Activated naive CD4-positive, alpha-beta T cell treated with anti-CD3 and anti-CD28 coated beads for 36 hours (primary cell): ENCODE measurements at regions of chr11 and their contacts with region 1.

Region 1: DNA sequence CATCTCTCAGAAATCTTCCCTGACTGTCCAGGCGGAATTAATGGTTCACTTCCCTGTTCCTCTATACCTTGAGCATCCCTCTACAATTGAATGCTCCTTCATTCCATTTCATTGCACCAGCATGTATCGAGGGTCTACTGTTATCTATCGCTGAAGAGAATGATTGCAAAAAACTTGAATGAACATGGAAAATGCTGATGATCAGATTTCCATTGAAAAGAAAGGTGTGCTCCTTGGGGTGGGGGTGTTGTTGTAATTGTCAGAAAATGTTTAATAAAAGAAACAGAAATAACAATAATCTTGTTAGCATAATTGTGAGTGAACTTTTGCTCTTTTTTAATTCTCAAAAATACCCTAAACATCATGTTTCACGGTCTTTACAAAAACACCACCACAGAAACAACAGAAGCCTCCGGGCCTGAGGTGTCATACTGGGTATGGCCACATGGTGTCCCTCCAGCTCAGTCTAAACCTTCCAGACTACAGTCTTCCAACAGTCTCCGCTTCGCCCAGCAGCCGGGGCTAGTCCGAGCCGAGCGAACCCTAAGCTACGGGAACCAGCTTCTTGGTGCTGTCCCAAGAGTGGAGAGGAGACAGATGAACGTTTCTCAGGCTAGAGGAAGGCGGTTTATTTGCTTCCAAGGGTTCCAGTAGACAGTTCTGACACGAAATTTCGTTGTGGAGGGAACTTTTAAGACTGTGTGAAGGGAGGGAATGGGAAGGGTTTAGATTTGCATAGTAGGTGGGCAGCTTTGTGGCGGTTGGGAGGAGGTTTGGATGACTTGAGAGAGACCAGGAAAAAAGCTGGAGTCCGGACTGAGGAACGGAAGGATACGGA is 75.8 kb upstream of the ZBED5 start:
- DNase-seq: peak; percentile 93
- H3K4me3 Mint-ChIP-seq: peak overlapping the region; percentile 70
- H3K27ac Mint-ChIP-seq: no peak overlapping the region
- H3K4me1 Mint-ChIP-seq: peaks cover 12% of the 10 kb centered on the region
- H3K27me3 Mint-ChIP-seq: peaks cover 31% of the 10 kb centered on the region

Region 2: GRCh38 chr11:10808553-10809372 is 124.9 kb before region 1 on chr11 and contains the start of gene EIF4G2:
- CTCF ChIA-PET with region 1: no interaction called
- intact Hi-C with region 1: loop called (anchors 5 kb)
- DNase-seq: peak; percentile 98
- H3K4me3 Mint-ChIP-seq: peak within 1 kb of the TSS; percentile 95
- H3K27ac Mint-ChIP-seq: peak within 1 kb of the TSS; percentile 97
- H3K4me1 Mint-ChIP-seq: peaks cover 43% of the 10 kb centered on the region
- H3K27me3 Mint-ChIP-seq: no peaks in the 10 kb centered on the region
- total RNA-seq, gene EIF4G2: 640 to 734 TPM

Region 3: DNA sequence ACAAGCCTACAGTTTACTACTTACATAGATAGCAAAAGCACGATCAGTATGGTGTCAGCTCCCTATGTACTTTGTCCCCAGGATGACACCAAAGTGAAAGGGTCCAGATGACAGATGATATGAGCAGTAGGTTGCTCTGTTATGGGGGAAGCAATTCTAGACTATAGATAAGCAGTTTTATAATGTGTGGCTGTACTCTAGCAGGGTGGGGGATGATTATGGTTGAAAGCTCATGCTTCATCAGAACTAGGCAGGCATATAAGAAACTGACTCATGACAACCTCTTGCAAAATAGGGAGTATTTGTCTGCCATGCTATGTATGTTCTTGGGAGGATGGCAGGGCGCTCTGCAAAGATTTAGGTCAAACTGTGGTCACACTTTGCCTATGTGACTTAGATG is 82.4 kb after region 1 on chr11:
- CTCF ChIA-PET with region 1: interaction called, 33 read pairs
- intact Hi-C with region 1: no loop called
- DNase-seq: no peak
- H3K4me3 Mint-ChIP-seq: no peak overlapping the region
- H3K27ac Mint-ChIP-seq: no peak overlapping the region
- H3K4me1 Mint-ChIP-seq: no peaks in the 10 kb centered on the region
- H3K27me3 Mint-ChIP-seq: peaks cover under 1% of the 10 kb centered on the region

Region 4: GRCh38 chr11:11028017-11028692 is 94.5 kb after region 1 on chr11:
- CTCF ChIA-PET with region 1: interaction called, 40 read pairs
- intact Hi-C with region 1: no loop called
- DNase-seq: peak; percentile 88
- H3K4me3 Mint-ChIP-seq: no peak overlapping the region
- H3K27ac Mint-ChIP-seq: no peak overlapping the region
- H3K4me1 Mint-ChIP-seq: no peaks in the 10 kb centered on the region
- H3K27me3 Mint-ChIP-seq: no peaks in the 10 kb centered on the region

Region 5: DNA sequence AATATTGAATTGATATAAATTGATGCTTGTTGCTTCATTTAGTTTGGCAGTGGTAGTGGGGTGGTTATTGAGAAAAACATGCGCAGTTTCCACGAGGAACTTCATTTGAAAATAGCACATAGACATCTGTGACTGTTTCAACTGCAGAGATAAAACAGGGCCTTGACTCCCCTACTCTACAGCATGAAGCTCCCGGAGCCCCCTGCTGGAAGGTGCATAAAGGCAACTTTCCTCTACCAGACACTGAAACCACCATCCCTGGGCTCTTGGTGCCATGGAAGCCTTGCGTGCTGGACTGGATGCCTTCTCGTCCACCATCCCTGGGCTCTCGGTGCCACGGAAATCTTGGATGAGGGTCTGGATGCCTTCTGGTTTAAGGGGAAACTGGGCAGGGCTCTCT is 223.5 kb after region 1 on chr11:
- CTCF ChIA-PET with region 1: interaction called, 6 read pairs
- intact Hi-C with region 1: loop called (anchors 5 kb)
- DNase-seq: peak; percentile 66
- H3K4me3 Mint-ChIP-seq: no peak overlapping the region
- H3K27ac Mint-ChIP-seq: no peak overlapping the region
- H3K4me1 Mint-ChIP-seq: peaks cover 28% of the 10 kb centered on the region
- H3K27me3 Mint-ChIP-seq: no peaks in the 10 kb centered on the region

Region 6: GRCh38 chr11:11787305-11788062 is 853.8 kb after region 1 on chr11:
- CTCF ChIA-PET with region 1: interaction called, 5 read pairs
- intact Hi-C with region 1: loop called (anchors 1 kb)
- DNase-seq: peak; percentile 83
- H3K4me3 Mint-ChIP-seq: no peak overlapping the region
- H3K27ac Mint-ChIP-seq: no peak overlapping the region
- H3K4me1 Mint-ChIP-seq: no peaks in the 10 kb centered on the region
- H3K27me3 Mint-ChIP-seq: peaks cover 3% of the 10 kb centered on the region